ENCODE measurements at regions of chr2 and their contacts with region 1.

Region 1: DNA sequence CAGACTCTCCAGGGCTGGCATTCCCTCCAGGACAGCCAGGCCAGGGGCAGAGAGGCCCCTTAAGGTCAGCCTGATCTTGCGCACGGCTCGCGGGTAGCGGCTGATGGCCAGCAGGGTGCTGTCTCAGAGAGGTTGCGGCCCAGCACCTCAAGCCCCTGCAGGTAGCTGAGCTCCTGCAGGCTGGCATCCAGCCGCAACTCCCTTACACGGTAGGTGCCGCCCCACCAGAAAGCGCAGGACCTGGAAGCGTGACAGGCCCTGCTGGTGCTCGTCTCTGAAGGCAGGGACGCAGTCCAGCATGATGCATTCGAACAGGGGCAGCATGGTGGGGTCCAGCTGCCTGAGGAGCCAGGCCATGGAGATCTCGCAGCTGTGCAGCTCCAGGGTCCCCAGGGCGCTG is 38.9 kb downstream of the C1D start:
- DNase-seq: no peak
- H3K4me3 ChIP-seq: no peak overlapping the region
- H3K4me3 Mint-ChIP-seq: no peak overlapping the region
- H3K27ac Mint-ChIP-seq: no peak overlapping the region
- H3K4me1 ChIP-seq: no peaks in the 10 kb centered on the region
- H3K4me1 Mint-ChIP-seq: no peaks in the 10 kb centered on the region
- H3K27me3 ChIP-seq: no peaks in the 10 kb centered on the region
- H3K27me3 Mint-ChIP-seq: peaks cover 6% of the 10 kb centered on the region
- CTCF ChIP-seq: no peak

Region 2: DNA sequence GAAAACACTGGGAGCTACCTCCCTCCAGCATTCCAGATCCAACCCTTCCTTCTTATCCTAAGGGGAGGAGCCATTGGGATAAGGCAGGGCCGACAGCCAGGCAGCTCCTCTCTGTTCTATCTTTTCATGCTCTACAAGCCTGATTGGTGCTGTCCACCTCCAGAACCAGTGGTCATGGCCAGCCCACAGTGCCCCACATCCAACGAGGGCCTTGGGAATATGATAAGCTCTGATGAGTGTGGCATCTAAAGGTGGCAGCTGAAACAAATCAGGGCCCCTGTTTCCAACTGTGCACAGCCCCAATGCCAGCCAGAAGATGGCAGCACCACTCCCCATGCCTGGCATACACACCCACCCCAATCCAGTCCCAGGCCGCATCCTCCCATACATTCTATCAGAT is 290.4 kb before region 1 on chr2:
- CTCF ChIA-PET with region 1: no interaction called
- POLR2A ChIA-PET with region 1: no interaction called
- intact Hi-C with region 1: loop called (anchors 2 kb)
- DNase-seq: peak; percentile 36 to 37
- H3K4me3 ChIP-seq: no peak overlapping the region
- H3K4me3 Mint-ChIP-seq: no peak overlapping the region
- H3K27ac Mint-ChIP-seq: no peak overlapping the region
- H3K4me1 ChIP-seq: no peaks in the 10 kb centered on the region
- H3K4me1 Mint-ChIP-seq: no peaks in the 10 kb centered on the region
- H3K27me3 ChIP-seq: no peaks in the 10 kb centered on the region
- H3K27me3 Mint-ChIP-seq: peaks cover 1% of the 10 kb centered on the region
- CTCF ChIP-seq: peak; percentile 26 to 45

Region 3: DNA sequence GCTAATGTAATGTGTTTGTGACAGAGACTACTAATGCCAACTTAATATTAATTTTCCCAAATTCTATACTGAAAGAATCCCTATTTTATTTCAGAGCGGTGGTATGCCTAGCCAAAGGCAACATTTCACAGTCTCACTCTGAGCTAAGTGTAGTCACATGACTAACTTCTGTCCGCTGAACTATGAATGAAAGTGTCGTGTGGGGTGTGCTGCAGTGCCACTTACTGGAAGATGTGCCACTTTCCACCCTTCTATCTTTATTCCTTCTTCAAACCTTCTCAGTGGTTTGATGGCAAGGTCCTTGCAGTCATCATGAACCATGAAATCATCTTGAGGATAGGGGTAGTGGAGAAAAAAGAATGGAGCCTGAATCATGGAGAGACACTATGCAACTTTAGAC is 86.2 kb after region 1 on chr2:
- CTCF ChIA-PET with region 1: no interaction called
- POLR2A ChIA-PET with region 1: no interaction called
- intact Hi-C with region 1: no loop called
- DNase-seq: peak in 1 of 2 experiments; percentile 19
- H3K4me3 ChIP-seq: no peak overlapping the region
- H3K4me3 Mint-ChIP-seq: no peak overlapping the region
- H3K27ac Mint-ChIP-seq: no peak overlapping the region
- H3K4me1 ChIP-seq: no peaks in the 10 kb centered on the region
- H3K4me1 Mint-ChIP-seq: no peaks in the 10 kb centered on the region
- H3K27me3 ChIP-seq: no peaks in the 10 kb centered on the region
- H3K27me3 Mint-ChIP-seq: no peaks in the 10 kb centered on the region
- CTCF ChIP-seq: peak in 1 of 2 experiments; percentile 18